ENCODE measurements at regions of chr2 and their contacts with region 1.

Region 1: DNA sequence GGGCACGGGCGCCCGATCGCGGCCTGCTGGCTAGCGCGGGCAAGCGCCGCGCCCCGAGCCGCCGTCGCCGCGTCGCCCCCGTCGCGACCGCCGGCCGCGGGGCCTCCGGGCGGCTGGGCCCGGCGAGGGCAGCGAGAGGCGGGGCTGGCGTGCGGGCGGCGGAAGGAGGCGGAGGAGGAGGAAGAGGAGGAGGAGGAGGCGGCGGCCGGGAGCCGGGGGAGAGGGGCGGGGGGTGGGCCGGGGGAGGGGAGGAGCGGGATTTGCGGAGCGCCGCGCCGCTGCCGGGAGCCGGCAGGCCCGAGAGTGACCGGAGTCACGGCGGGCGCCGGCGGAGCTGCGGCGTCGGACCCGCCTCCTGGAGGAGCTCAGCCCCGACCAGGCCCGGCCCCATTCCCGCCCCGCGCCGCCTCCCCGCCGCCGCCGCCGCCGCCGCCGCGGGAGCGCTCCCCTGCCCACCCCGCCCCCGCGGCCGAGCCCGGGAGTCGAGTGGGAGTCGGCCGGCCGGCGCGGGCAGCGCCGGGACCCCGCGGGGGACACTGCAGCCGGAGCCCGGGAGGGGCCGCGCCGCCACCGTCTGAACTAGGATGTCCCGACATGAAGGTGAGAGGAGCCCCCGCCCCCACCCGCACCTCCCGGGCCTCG is at the start of gene KCMF1:
- DNase-seq: peak; percentile 44 to 82 (median 63)
- ATAC-seq: peak; percentile 49
- H3K4me3 ChIP-seq: peak within 1 kb of the TSS; percentile 99
- H3K4me3 Mint-ChIP-seq: peak within 1 kb of the TSS; percentile 99
- H3K27ac ChIP-seq: peak within 1 kb of the TSS; percentile 84 to 91
- H3K27ac Mint-ChIP-seq: peak within 1 kb of the TSS; percentile 98
- H3K4me1 ChIP-seq: peaks cover 28% of the 10 kb centered on the region
- H3K4me1 Mint-ChIP-seq: peaks cover 61% of the 10 kb centered on the region
- H3K27me3 ChIP-seq: no peaks in the 10 kb centered on the region
- H3K27me3 Mint-ChIP-seq: no peaks in the 10 kb centered on the region
- CTCF ChIP-seq: no peak
- total RNA-seq, gene KCMF1: 72.4 to 78.0 TPM

Region 2: GRCh38 chr2:84459018-84459943 is 511.7 kb before region 1 on chr2 and contains the start of gene SUCLG1:
- CTCF ChIA-PET with region 1: no interaction called
- POLR2A ChIA-PET with region 1: no interaction called
- intact Hi-C with region 1: loop called in 1 of 2 experiments (anchors 2 kb)
- DNase-seq: peak; percentile 73 to 94 (median 80)
- ATAC-seq: peak; percentile 94
- H3K4me3 ChIP-seq: peak within 1 kb of the TSS; percentile 93
- H3K4me3 Mint-ChIP-seq: peak within 1 kb of the TSS; percentile 95
- H3K27ac ChIP-seq: peak within 1 kb of the TSS; percentile 87 to 94
- H3K27ac Mint-ChIP-seq: peak within 1 kb of the TSS; percentile 92
- H3K4me1 ChIP-seq: peaks cover 19% of the 10 kb centered on the region
- H3K4me1 Mint-ChIP-seq: peaks cover 49% of the 10 kb centered on the region
- H3K27me3 ChIP-seq: no peaks in the 10 kb centered on the region
- H3K27me3 Mint-ChIP-seq: no peaks in the 10 kb centered on the region
- CTCF ChIP-seq: no peak
- total RNA-seq, gene SUCLG1: 34.2 to 37.1 TPM

Region 3: GRCh38 chr2:84939426-84940087 is 31.4 kb before region 1 on chr2:
- CTCF ChIA-PET with region 1: no interaction called
- POLR2A ChIA-PET with region 1: interaction called, 70 read pairs
- intact Hi-C with region 1: loop called in 1 of 2 experiments (anchors 5 kb)
- DNase-seq: peak; percentile 29 to 92 (median 54)
- ATAC-seq: peak; percentile 85
- H3K4me3 ChIP-seq: peak overlapping the region; percentile 33
- H3K4me3 Mint-ChIP-seq: peak overlapping the region; percentile 66
- H3K27ac ChIP-seq: peak overlapping the region; percentile 64 to 82
- H3K27ac Mint-ChIP-seq: peak overlapping the region; percentile 89
- H3K4me1 ChIP-seq: peaks cover 29% of the 10 kb centered on the region
- H3K4me1 Mint-ChIP-seq: peaks cover 35% of the 10 kb centered on the region
- H3K27me3 ChIP-seq: no peaks in the 10 kb centered on the region
- H3K27me3 Mint-ChIP-seq: no peaks in the 10 kb centered on the region
- CTCF ChIP-seq: no peak

Region 4: GRCh38 chr2:84986018-84986417 is 15.0 kb after region 1 on chr2:
- CTCF ChIA-PET with region 1: interaction called, 4 read pairs
- POLR2A ChIA-PET with region 1: interaction called, 5 read pairs
- intact Hi-C with region 1: loop called in 1 of 2 experiments (anchors 2 kb)
- DNase-seq: no peak
- ATAC-seq: no peak
- H3K4me3 ChIP-seq: no peak overlapping the region
- H3K4me3 Mint-ChIP-seq: no peak overlapping the region
- H3K27ac ChIP-seq: no peak overlapping the region
- H3K27ac Mint-ChIP-seq: peak overlapping the region; percentile 34
- H3K4me1 ChIP-seq: peaks cover 73% of the 10 kb centered on the region
- H3K4me1 Mint-ChIP-seq: peaks cover 33% of the 10 kb centered on the region
- H3K27me3 ChIP-seq: no peaks in the 10 kb centered on the region
- H3K27me3 Mint-ChIP-seq: no peaks in the 10 kb centered on the region
- CTCF ChIP-seq: no peak

Region 5: GRCh38 chr2:85017411-85018048 is 46.5 kb after region 1 on chr2:
- CTCF ChIA-PET with region 1: interaction called, 5 read pairs
- POLR2A ChIA-PET with region 1: interaction called, 6 read pairs
- intact Hi-C with region 1: loop called (anchors 2 to 5 kb)
- DNase-seq: peak in 3 of 14 experiments; percentile 34 to 40 (median 40)
- ATAC-seq: peak; percentile 39
- H3K4me3 ChIP-seq: no peak overlapping the region
- H3K4me3 Mint-ChIP-seq: peak overlapping the region; percentile 67
- H3K27ac ChIP-seq: peak overlapping the region in 1 of 2 donors; percentile 12
- H3K27ac Mint-ChIP-seq: peak overlapping the region; percentile 73
- H3K4me1 ChIP-seq: peaks cover 4% of the 10 kb centered on the region
- H3K4me1 Mint-ChIP-seq: peaks cover 77% of the 10 kb centered on the region
- H3K27me3 ChIP-seq: no peaks in the 10 kb centered on the region
- H3K27me3 Mint-ChIP-seq: no peaks in the 10 kb centered on the region
- CTCF ChIP-seq: peak; percentile 65

Region 6: DNA sequence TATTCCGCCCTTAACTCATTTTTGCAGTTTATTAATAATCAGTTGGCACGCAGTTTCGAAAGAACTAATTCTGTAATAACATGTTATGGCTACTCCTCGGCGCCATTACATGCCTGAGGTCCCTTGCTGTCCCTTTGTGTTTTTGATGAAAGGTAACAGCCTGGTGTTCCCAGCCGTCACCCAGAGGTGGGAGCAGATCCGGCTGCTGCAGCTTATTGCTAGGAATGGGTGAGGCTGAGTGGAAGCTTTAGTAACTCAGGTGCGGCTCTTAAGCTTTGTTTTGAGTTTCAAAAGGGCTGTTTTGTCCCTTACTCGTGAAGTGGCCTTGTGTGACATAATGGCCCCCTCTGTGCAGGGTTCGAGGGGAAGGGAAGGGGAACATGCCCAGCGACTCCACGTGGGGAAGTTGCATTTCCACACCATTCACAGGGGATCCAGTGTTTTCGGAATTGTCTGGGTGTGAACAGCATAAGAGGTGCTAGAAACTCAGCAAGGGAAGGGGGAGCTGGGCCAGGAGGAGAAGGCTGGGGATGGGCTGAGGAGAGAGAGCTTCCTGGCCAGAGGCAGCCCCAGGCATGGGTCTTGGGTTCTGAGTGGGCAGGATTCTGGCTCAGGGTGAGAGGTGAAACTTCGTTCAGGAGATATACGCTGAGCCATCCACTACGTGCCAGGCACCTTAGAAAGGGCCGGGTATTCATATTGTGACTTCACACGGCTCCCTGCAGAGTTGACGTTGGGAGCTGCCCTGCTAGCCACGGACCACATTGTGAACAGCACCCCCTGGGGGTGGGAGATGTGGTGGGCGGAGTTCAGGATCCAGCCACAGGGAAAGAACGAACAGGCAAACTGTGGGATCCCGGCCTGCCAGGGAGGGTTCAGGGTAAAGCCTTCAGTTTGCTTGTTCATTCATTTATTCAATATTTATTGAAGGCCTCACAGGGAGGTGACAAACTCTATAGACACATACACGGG is 272.4 kb after region 1 on chr2:
- CTCF ChIA-PET with region 1: no interaction called
- POLR2A ChIA-PET with region 1: no interaction called
- intact Hi-C with region 1: no loop called
- DNase-seq: peak in 4 of 14 experiments; percentile 7 to 37 (median 24)
- ATAC-seq: no peak
- H3K4me3 ChIP-seq: no peak overlapping the region
- H3K4me3 Mint-ChIP-seq: no peak overlapping the region
- H3K27ac ChIP-seq: no peak overlapping the region
- H3K27ac Mint-ChIP-seq: no peak overlapping the region
- H3K4me1 ChIP-seq: no peaks in the 10 kb centered on the region
- H3K4me1 Mint-ChIP-seq: peaks cover 4% of the 10 kb centered on the region
- H3K27me3 ChIP-seq: no peaks in the 10 kb centered on the region
- H3K27me3 Mint-ChIP-seq: peaks cover 20% of the 10 kb centered on the region
- CTCF ChIP-seq: no peak

Measured in CD4-positive, alpha-beta T cell (primary cell).